Activated CD4-positive, alpha-beta T cell treated with anti-CD3 and anti-CD28 coated beads for 36 hours (primary cell): ENCODE measurements at regions of chr7 and their contacts with region 1.

Region 1: DNA sequence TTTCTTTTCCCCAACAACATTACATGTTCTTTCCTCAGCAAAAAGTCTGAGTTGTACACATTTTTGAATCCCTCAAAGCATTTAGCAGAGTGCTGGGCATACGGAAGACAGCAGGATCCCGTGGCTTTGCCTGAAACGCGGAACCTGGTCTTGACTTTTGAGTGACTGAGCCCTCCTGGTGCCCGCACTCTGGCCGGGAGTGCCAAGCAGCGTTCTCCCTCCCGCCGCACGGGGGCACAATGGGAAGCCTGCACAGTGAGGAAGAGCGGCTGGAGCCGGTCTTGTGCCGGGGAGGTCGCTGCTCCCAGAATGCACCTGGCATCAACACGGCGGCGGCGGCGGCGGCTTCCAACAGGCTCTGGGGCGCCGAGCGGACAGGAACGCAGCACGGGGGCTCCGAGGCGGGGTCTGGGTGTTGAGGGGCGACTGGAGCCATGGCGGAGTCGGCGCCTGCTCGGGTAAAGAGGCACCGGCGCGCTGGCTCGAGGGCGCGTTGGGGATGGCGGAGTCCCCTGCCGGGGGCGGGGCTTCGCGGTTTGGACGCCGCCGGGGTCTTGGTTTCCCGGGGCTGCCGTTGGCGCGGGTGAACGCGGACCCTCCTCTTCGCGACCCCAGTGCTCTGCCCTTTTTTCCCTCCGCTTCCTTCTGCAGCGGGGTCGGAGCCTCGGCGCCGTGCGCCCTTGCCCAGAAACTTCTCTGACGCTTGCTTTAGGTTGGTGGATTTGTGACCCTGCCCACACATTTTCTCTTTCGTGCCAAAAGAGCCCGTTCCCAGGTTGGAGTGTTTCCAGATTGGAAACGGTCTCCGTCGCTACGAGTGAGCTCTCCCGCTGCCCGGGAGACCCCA is at the start of gene ZNF212:
- DNase-seq: peak; percentile 95
- ATAC-seq: peak; percentile 98
- H3K4me3 Mint-ChIP-seq: peak within 1 kb of the TSS; percentile 93
- H3K27ac Mint-ChIP-seq: peak within 1 kb of the TSS; percentile 83
- H3K4me1 Mint-ChIP-seq: peaks cover 32% of the 10 kb centered on the region
- H3K27me3 Mint-ChIP-seq: no peaks in the 10 kb centered on the region
- total RNA-seq, gene ZNF212: 9.9 to 15.9 TPM

Region 2: GRCh38 chr7:149147072-149147751 is 92.4 kb before region 1 on chr7 and contains the start of gene ZNF398:
- CTCF ChIA-PET with region 1: no interaction called
- POLR2A ChIA-PET with region 1: no interaction called
- intact Hi-C with region 1: loop called in 1 of 2 experiments (anchors 2 kb)
- DNase-seq: peak; percentile 87
- ATAC-seq: peak; percentile 71
- H3K4me3 Mint-ChIP-seq: peak within 1 kb of the TSS; percentile 98
- H3K27ac Mint-ChIP-seq: peak within 1 kb of the TSS; percentile 99
- H3K4me1 Mint-ChIP-seq: peaks cover 34% of the 10 kb centered on the region
- H3K27me3 Mint-ChIP-seq: no peaks in the 10 kb centered on the region
- total RNA-seq, gene ZNF398: 9.6 to 10.5 TPM

Region 3: DNA sequence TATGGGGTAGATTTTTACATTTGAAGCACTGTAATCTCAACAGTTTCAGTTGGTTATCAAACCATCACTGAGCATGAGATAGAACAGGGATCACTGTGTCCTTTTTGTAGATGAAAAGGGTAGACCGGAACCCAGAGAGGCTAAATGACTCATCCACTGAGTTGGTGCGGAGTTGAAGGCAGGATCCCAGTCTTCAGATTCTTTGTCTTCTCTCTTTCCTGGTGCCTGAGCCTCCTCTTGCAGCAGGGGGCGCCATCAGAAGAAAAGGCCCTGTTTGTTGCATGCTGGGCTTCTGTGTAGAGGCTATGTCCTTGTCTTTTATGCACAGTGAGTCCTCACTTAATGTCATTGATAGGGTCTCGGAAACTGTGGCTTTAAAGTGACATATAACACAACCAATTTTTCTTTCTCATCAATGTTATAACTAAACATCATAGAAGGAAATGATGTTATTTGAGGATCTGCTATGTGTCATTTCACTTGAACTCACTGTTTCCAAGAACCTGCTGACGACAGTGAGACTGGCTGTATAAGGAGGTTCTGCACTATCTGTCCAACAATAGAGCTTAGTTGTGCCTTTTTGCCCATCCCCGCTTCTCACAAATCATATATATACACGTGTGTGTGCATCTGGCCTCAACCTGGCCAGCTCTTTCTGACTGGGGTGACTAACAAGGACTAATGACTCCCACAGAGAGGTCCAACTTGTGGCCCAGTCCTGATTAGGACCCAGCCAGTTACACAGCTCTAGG is 29.9 kb before region 1 on chr7:
- CTCF ChIA-PET with region 1: interaction called, 6 read pairs
- POLR2A ChIA-PET with region 1: interaction called, 4 read pairs
- intact Hi-C with region 1: loop called (anchors 2 kb)
- DNase-seq: peak; percentile 93
- ATAC-seq: peak; percentile 89
- H3K4me3 Mint-ChIP-seq: peak overlapping the region; percentile 38
- H3K27ac Mint-ChIP-seq: peak overlapping the region; percentile 94
- H3K4me1 Mint-ChIP-seq: peaks cover 32% of the 10 kb centered on the region
- H3K27me3 Mint-ChIP-seq: no peaks in the 10 kb centered on the region

Region 4: DNA sequence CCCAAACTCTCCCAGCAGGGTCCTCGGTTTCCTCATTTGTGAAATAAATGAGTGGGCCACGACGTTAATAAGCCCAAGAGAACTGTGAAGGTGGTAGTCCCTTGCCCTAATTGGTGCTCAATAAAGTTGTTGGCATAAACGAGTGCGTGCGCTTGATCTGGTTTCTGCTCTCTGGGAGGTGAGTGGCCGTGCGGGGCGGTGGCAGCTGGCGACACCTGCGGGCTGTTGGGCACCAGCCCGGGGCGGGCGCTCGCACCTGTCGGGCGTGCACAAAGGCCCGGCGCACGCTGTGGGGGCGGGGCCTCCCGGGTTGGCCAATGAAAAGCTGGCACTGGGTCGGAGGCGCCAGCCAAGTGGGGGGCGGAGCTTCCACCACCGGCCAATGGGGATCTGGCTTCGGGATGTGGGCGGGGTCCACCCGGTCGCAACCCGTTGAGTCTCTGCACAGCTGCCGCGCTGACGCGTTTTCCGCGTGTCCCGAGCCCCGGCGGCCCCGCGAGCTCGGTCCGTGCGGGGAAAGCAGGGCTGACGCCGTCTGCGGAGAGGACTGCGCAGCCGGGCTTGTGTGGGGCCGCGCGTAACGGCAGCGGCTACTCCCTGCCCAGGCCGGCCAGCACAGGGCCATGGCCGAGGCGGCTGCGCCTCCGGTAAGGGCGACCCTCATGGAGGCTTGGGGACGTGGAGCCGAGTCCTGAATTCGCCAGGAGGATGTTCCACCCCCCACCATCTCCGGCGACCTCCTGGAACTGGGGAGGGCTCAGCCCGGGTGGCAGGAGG is 45.5 kb after region 1 on chr7:
- CTCF ChIA-PET with region 1: interaction called, 7 read pairs
- POLR2A ChIA-PET with region 1: no interaction called
- intact Hi-C with region 1: loop called in 1 of 2 experiments (anchors 1 kb)
- DNase-seq: peak; percentile 99
- ATAC-seq: peak; percentile 99
- H3K4me3 Mint-ChIP-seq: peak overlapping the region; percentile 84
- H3K27ac Mint-ChIP-seq: peak overlapping the region; percentile 61
- H3K4me1 Mint-ChIP-seq: peaks cover 38% of the 10 kb centered on the region
- H3K27me3 Mint-ChIP-seq: no peaks in the 10 kb centered on the region

Region 5: GRCh38 chr7:149598721-149599306 is 359.2 kb after region 1 on chr7:
- CTCF ChIA-PET with region 1: no interaction called
- POLR2A ChIA-PET with region 1: no interaction called
- intact Hi-C with region 1: loop called in 1 of 2 experiments (anchors 2 kb)
- DNase-seq: peak; percentile 65
- ATAC-seq: peak; percentile 38
- H3K4me3 Mint-ChIP-seq: no peak overlapping the region
- H3K27ac Mint-ChIP-seq: no peak overlapping the region
- H3K4me1 Mint-ChIP-seq: peaks cover 34% of the 10 kb centered on the region
- H3K27me3 Mint-ChIP-seq: no peaks in the 10 kb centered on the region